ENCODE measurements at regions of chr11 and their contacts with region 1.

Region 1: DNA sequence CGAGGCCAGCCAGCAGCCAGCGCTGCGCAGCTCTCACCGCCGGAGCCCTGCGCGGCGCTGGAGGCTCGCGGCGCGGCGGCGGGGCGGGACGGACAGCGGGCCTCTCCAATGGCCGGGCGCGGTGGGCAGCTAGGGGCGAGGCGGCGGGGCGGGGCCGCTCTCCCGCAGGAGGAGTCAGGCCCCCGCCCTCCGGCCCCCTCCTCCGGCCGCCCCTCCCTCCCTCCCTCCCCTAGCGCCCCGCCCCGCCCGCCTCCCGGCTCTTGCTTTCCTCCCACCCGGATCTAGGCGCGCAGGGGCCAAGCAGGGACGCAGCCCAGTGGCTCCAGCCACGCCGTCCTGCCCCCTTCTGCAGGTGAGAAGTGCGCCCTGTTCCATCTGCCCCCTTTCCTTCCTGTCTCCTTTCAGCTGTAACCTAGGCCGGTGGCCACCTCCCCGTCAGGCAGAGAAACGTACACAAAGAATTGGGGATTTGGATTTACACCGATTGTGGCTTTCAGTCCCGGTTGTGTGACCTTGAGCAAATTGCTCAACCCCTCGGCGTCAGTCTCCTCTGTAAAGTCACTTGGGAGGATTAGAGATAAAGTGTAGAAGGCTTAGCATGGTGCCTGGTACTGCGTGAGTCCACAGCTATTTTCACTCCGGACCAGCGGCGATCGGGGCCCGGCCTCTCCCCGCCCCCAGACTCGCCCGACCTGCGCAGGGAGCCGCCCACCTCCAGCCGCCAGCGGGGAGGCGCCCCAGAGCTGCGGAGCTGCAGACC is at the start of gene FZD4:
- DNase-seq: peak; percentile 94 to 96
- ATAC-seq: peak; percentile 94
- H3K4me3 ChIP-seq: peak within 1 kb of the TSS; percentile 94 to 98
- H3K27ac ChIP-seq: peak within 1 kb of the TSS; percentile 34 to 75
- H3K4me1 ChIP-seq: peaks cover 0 to 8% of the 10 kb centered on the region in 2 donors
- H3K27me3 ChIP-seq: no peaks in the 10 kb centered on the region
- total RNA-seq, gene FZD4: 50.8 to 91.2 TPM

Region 2: DNA sequence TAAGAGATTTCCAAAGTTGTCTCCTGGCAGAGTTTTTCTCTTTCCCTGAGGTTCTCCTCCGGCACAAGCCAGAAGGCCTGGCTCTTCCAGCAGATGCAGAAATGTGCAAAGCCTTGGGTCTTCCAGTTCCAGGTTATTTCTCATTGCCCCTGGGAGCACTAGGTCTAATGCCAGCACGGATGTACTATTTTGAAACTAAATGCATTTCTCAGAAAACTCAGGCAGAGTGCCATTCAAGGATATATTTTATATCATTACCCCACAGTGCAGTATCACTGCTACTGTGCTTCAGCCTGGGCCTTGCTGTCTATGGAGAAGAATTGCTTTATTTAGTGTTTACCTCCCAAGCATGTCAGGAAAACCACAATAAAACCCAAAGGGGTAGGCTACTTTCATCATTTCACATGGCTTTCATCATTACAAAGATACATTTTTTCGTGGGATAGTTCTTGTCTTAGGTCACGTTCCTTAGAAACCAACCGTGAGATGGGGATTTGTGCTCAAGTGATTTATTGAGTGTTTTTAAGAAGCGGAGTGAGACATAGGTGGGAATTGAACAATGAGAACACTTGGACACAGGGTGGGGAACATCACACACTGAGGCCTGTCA is 22.0 kb after region 1 on chr11:
- intact Hi-C with region 1: loop called in 1 of 2 experiments (anchors 2 kb)
- DNase-seq: no peak
- ATAC-seq: peak; percentile 78
- H3K4me3 ChIP-seq: no peak overlapping the region
- H3K27ac ChIP-seq: peak overlapping the region in 1 of 2 donors; percentile 5
- H3K4me1 ChIP-seq: peaks cover 0 to 4% of the 10 kb centered on the region in 2 donors
- H3K27me3 ChIP-seq: no peaks in the 10 kb centered on the region

Region 3: GRCh38 chr11:86990515-86990914 is 35.0 kb after region 1 on chr11:
- intact Hi-C with region 1: loop called in 1 of 2 experiments (anchors 5 kb)
- DNase-seq: no peak
- ATAC-seq: no peak
- H3K4me3 ChIP-seq: no peak overlapping the region
- H3K27ac ChIP-seq: no peak overlapping the region
- H3K4me1 ChIP-seq: peaks cover 2 to 9% of the 10 kb centered on the region in 2 donors
- H3K27me3 ChIP-seq: no peaks in the 10 kb centered on the region

Region 4: DNA sequence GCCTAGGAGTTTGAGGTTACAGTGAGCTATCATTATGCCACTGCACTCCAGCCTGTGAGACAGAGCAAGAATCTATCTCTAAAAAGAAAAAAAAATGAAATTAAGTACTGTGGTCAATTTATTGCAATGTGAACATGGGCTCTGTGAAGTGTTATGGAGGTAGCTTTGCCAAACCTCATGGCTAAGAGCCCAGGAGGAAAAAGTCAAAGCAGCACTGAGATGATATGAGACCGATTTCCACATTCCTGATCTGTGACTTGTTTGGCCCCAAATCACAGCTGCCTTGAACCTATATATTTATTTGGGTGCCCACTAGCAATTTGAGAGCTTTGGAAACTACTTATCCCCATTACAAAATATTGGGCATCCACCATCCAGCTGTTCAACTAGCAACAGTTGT is 52.4 kb after region 1 on chr11:
- intact Hi-C with region 1: no loop called
- DNase-seq: no peak
- ATAC-seq: no peak
- H3K4me3 ChIP-seq: no peak overlapping the region
- H3K27ac ChIP-seq: no peak overlapping the region
- H3K4me1 ChIP-seq: peaks cover 3 to 5% of the 10 kb centered on the region in 2 donors
- H3K27me3 ChIP-seq: no peaks in the 10 kb centered on the region

Region 5: DNA sequence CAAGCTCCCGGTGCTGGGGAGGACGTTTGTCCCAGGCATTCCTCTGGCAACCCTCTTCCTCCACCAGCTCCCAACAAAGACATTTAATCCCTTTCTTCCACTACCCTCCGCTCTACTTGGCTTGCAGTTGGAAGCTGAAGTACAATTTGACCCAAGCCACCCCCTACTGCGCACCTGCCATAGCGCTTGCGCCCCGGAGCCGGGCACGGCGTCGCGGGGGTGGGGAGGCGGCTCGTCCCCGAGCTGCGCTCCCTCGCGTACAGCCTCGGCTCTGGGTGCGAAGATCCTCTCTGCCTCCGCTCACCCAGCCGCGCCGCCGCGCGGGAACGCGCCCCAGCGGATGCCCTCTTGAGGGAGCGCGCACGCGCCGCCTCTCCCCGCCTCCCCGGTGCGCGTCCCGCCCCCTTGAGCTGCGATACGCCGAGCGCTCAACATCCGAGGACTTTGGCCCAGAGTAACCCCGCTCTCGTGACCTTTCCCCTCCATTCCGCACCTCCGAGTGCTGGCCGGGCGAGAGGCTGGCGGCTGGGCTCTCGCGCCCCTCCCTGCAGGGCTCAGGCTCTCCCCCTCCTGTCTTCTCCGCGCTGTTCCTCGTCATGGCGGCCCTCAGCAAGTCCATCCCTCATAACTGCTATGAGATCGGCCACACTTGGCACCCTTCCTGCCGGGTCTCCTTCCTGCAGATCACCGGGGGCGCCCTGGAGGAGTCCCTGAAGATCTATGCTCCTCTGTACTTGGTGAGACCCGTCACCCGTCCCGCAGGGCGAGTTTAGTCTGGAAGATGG is 82.1 kb after region 1 on chr11 and contains the start of gene TMEM135:
- intact Hi-C with region 1: loop called (anchors 2 to 5 kb)
- DNase-seq: peak; percentile 96 to 98
- ATAC-seq: peak; percentile 97
- H3K4me3 ChIP-seq: peak within 1 kb of the TSS; percentile 22 to 90
- H3K27ac ChIP-seq: peak within 1 kb of the TSS; percentile 8 to 42
- H3K4me1 ChIP-seq: peaks cover 0 to 13% of the 10 kb centered on the region in 2 donors
- H3K27me3 ChIP-seq: no peaks in the 10 kb centered on the region
- total RNA-seq, gene TMEM135: 33.9 to 49.0 TPM